ENCODE measurements at regions of chr5 and their contacts with region 1.

Region 1: GRCh38 chr5:132238169-132238744 is 10.6 kb upstream of the P4HA2 start:
- DNase-seq: peak; percentile 71
- H3K4me3 ChIP-seq: no peak overlapping the region; a peak in 1 of 4 replicates
- H3K27ac ChIP-seq: no peak overlapping the region
- H3K4me1 ChIP-seq: no peaks in the 10 kb centered on the region
- H3K27me3 ChIP-seq: no peaks in the 10 kb centered on the region
- CTCF ChIP-seq: peak; percentile 85
- EP300 ChIP-seq: no peak
- RAD21 ChIP-seq: peak; percentile 82

Region 2: GRCh38 chr5:132064738-132065331 is 173.4 kb before region 1 on chr5:
- CTCF ChIA-PET with region 1: interaction called, 10 read pairs
- POLR2A ChIA-PET with region 1: no interaction called
- DNase-seq: peak; percentile 87
- H3K4me3 ChIP-seq: peak overlapping the region in 1 of 2 experiments; percentile 43; a peak in 1 of 4 replicates
- H3K27ac ChIP-seq: no peak overlapping the region
- H3K4me1 ChIP-seq: no peaks in the 10 kb centered on the region
- H3K27me3 ChIP-seq: no peaks in the 10 kb centered on the region
- CTCF ChIP-seq: peak; percentile 89
- EP300 ChIP-seq: no peak
- RAD21 ChIP-seq: peak; percentile 74

Region 3: DNA sequence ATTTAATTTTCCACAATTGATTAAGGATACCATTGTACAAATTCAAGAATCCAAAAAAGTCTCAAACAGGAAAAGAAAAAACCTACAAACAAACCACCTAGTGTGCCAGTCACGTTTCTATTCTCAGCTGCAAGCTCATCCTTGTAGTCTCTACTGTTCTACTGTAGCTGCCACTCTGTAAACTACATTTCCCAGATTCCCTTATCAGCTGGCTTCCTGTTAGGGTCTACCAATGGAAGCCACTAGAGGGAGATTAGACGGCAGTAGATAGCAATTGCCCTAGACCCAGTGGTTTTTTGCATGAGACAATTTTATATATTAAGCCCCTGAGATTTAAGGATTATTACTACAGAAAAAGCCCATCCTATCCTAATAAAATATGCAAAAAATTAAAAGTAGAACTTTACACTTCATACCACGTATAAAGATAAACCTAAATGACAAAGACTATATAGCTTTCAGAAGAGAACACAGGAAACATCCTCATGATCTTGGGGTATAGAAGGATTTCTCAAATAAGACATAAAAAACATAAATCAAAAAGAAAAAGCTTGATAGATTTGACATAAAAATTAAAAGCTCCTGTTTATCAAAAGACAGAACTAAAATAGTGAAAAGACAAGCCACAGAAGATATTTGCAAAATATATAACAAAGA is 48.0 kb before region 1 on chr5:
- CTCF ChIA-PET with region 1: interaction called, 17 read pairs
- POLR2A ChIA-PET with region 1: no interaction called
- DNase-seq: peak; percentile 87
- H3K4me3 ChIP-seq: peak overlapping the region in 1 of 2 experiments; percentile 12; a peak in 2 of 4 replicates
- H3K27ac ChIP-seq: no peak overlapping the region; a peak in 1 of 4 replicates
- H3K4me1 ChIP-seq: no peaks in the 10 kb centered on the region; a peak in 1 of 4 replicates
- H3K27me3 ChIP-seq: no peaks in the 10 kb centered on the region
- CTCF ChIP-seq: peak; percentile 87
- EP300 ChIP-seq: no peak
- RAD21 ChIP-seq: peak; percentile 68

Region 4: GRCh38 chr5:132251220-132251725 is 13.0 kb after region 1 on chr5:
- CTCF ChIA-PET with region 1: interaction called, 24 read pairs
- POLR2A ChIA-PET with region 1: no interaction called
- DNase-seq: no peak
- H3K4me3 ChIP-seq: no peak overlapping the region
- H3K27ac ChIP-seq: no peak overlapping the region
- H3K4me1 ChIP-seq: peaks cover 4 to 5% of the 10 kb centered on the region in 2 experiments; a peak in 2 of 4 replicates
- H3K27me3 ChIP-seq: no peaks in the 10 kb centered on the region
- CTCF ChIP-seq: no peak
- EP300 ChIP-seq: no peak
- RAD21 ChIP-seq: no peak

Region 5: GRCh38 chr5:132272311-132273210 is 34.3 kb after region 1 on chr5:
- CTCF ChIA-PET with region 1: interaction called, 16 read pairs
- POLR2A ChIA-PET with region 1: no interaction called
- DNase-seq: peak; percentile 81
- H3K4me3 ChIP-seq: no peak overlapping the region
- H3K27ac ChIP-seq: no peak overlapping the region
- H3K4me1 ChIP-seq: peaks cover 18 to 32% of the 10 kb centered on the region in 2 experiments
- H3K27me3 ChIP-seq: no peaks in the 10 kb centered on the region
- CTCF ChIP-seq: peak; percentile 86
- EP300 ChIP-seq: no peak
- RAD21 ChIP-seq: peak; percentile 73

Region 6: GRCh38 chr5:132495667-132496190 is 257.5 kb after region 1 on chr5:
- CTCF ChIA-PET with region 1: interaction called, 13 read pairs
- POLR2A ChIA-PET with region 1: interaction called, 3 read pairs
- DNase-seq: peak; percentile 84
- H3K4me3 ChIP-seq: peak overlapping the region; percentile 69 to 78
- H3K27ac ChIP-seq: peak overlapping the region; percentile 96
- H3K4me1 ChIP-seq: peaks cover 24 to 29% of the 10 kb centered on the region in 2 experiments
- H3K27me3 ChIP-seq: no peaks in the 10 kb centered on the region
- CTCF ChIP-seq: 0 out of 2 replicates have a peak, but pooled peaks have one; percentile 11
- EP300 ChIP-seq: peak in 1 of 2 experiments; percentile 7; a peak in 1 of 4 replicates
- RAD21 ChIP-seq: no peak

Measured in SK-N-SH (cell line).